ENCODE measurements at regions of chr5 and their contacts with region 1.

Region 1: GRCh38 chr5:81971712-81972495 is at the start of gene ATG10:
- DNase-seq: peak; percentile 86
- H3K4me3 Mint-ChIP-seq: peak within 1 kb of the TSS; percentile 92
- H3K27ac Mint-ChIP-seq: peak within 1 kb of the TSS; percentile 99
- H3K4me1 Mint-ChIP-seq: peaks cover 33% of the 10 kb centered on the region
- H3K27me3 Mint-ChIP-seq: no peaks in the 10 kb centered on the region
- total RNA-seq, gene ATG10: 6.1 and 7.1 TPM in 2 replicates

Region 2: GRCh38 chr5:80654391-80655230 is 1317.3 kb before region 1 on chr5 and contains the starts of genes DHFR and MSH3:
- intact Hi-C with region 1: loop called (anchors 5 kb)
- DNase-seq: peak; percentile 84
- H3K4me3 Mint-ChIP-seq: peak within 1 kb of the TSS; percentile 93
- H3K27ac Mint-ChIP-seq: peak within 1 kb of the TSS; percentile 98
- H3K4me1 Mint-ChIP-seq: peaks cover 37% of the 10 kb centered on the region
- H3K27me3 Mint-ChIP-seq: no peaks in the 10 kb centered on the region
- total RNA-seq, gene DHFR: 55.9 and 60.3 TPM in 2 replicates
- total RNA-seq, gene MSH3: 20.2 and 20.7 TPM in 2 replicates

Region 3: DNA sequence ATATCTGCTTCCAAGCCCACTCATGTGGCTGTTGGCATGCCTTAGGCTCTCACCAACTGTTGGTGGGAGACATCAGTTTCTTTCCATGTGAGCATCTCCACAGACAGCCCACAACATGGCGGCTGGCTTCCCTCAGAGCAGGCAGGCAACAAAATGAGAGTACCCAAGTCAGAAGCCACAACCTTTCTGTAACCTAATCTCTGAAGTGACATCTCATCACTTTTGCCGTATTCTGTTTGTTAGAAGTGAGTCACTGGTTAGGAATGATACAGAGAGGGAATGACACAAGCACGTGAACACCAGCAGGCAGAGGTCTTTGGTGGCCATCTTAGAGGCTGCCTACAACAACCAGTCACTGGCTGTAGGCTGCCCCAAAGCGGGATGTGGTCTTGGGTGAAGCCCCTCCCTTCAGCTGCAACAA is 1100.4 kb before region 1 on chr5:
- intact Hi-C with region 1: loop called (anchors 5 kb)
- DNase-seq: no peak
- H3K4me3 Mint-ChIP-seq: no peak overlapping the region
- H3K27ac Mint-ChIP-seq: peak overlapping the region; percentile 55
- H3K4me1 Mint-ChIP-seq: peaks cover 34% of the 10 kb centered on the region
- H3K27me3 Mint-ChIP-seq: no peaks in the 10 kb centered on the region

Region 4: GRCh38 chr5:81506900-81507588 is 464.9 kb before region 1 on chr5:
- intact Hi-C with region 1: loop called (anchors 5 kb)
- DNase-seq: peak; percentile 11
- H3K4me3 Mint-ChIP-seq: no peak overlapping the region
- H3K27ac Mint-ChIP-seq: no peak overlapping the region
- H3K4me1 Mint-ChIP-seq: no peaks in the 10 kb centered on the region
- H3K27me3 Mint-ChIP-seq: no peaks in the 10 kb centered on the region

Region 5: DNA sequence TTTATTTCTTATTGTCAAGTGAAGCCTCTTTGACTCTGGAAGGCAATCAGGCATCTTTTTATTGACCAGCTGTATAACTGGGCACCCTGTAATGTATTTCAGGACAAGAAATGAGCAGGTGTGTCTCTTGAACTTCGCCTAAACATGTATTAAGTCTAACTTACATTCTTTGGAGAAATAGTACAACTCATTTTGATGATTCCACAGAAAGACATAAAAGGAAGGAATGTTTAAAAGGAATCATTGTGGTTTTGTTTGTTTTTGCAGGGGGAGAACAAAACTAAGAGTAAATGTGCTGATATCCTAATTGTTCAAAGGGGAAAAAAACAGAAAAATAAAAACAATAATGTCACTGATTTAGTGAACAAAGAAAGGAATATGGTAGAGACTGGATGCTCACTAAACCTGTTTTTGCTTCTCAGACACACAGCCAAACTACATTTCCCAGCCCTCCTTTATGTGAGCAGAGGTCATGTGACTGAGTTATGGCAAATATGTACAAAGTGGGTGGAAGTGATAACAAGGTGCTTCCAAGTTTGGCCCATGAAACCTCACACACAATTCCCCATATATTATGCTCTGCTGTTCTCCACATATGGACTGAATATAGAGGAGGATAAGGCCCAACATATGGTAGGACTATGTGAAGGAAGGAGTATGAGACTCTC is 427.4 kb before region 1 on chr5:
- intact Hi-C with region 1: no loop called
- DNase-seq: no peak
- H3K4me3 Mint-ChIP-seq: no peak overlapping the region
- H3K27ac Mint-ChIP-seq: no peak overlapping the region
- H3K4me1 Mint-ChIP-seq: no peaks in the 10 kb centered on the region
- H3K27me3 Mint-ChIP-seq: no peaks in the 10 kb centered on the region

Region 6: GRCh38 chr5:81751009-81751835 is 220.7 kb before region 1 on chr5 and contains the start of gene SSBP2:
- intact Hi-C with region 1: loop called (anchors 1 kb)
- DNase-seq: peak; percentile 98
- H3K4me3 Mint-ChIP-seq: peak within 1 kb of the TSS; percentile 91
- H3K27ac Mint-ChIP-seq: peak within 1 kb of the TSS; percentile 92
- H3K4me1 Mint-ChIP-seq: peaks cover 27% of the 10 kb centered on the region
- H3K27me3 Mint-ChIP-seq: peaks cover 9% of the 10 kb centered on the region
- total RNA-seq, gene SSBP2: 8.4 and 12.7 TPM in 2 replicates

Region 7: DNA sequence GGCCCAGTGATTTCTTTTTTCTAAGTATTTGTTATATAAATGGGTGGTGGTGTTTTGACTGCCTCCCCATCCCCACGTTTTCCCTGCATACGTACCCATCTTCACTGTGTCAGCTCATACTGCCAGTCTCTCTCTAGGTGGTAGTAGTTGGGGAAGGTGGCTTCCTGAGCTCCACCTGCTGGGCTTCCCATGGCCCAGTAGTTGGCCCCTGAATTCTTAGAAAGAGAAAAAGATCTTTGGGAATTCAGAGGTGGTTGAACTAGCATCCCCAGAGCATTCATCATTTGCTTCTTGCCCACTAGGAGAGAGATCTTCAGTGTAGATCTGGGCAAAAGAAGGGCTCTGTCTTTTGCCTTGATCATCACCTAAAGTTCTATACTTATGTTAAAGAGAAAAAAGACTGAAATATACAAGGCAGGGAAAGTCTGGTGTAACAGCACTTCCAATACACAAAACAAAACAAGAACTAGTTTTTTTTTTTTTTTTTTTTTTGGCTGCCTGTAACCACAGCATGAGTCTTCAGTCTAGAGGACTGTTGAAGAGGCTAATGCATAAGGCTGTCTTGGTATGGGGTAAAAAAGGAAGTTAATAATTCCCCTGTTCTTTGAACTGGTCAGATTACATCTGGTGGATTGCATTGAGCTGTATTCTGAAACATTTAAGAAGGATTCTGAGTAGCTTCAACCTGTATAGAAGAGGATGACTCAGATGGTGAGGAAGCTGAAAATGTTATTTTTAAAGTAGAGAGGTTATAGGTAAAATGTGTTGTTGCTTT is 128.6 kb after region 1 on chr5:
- intact Hi-C with region 1: loop called (anchors 5 kb)
- DNase-seq: no peak
- H3K4me3 Mint-ChIP-seq: no peak overlapping the region
- H3K27ac Mint-ChIP-seq: no peak overlapping the region
- H3K4me1 Mint-ChIP-seq: peaks cover 12% of the 10 kb centered on the region
- H3K27me3 Mint-ChIP-seq: no peaks in the 10 kb centered on the region

Region 8: GRCh38 chr5:82225525-82226172 is 253.7 kb after region 1 on chr5:
- intact Hi-C with region 1: loop called (anchors 2 kb)
- DNase-seq: peak; percentile 55
- H3K4me3 Mint-ChIP-seq: no peak overlapping the region
- H3K27ac Mint-ChIP-seq: no peak overlapping the region
- H3K4me1 Mint-ChIP-seq: no peaks in the 10 kb centered on the region
- H3K27me3 Mint-ChIP-seq: no peaks in the 10 kb centered on the region